MCF 10A (cell line): ENCODE measurements at regions of chr1 and their contacts with region 1.

Region 1: GRCh38 chr1:15046487-15047165 is 106.9 kb upstream of the TMEM51 start:
- DNase-seq: peak; percentile 80
- H3K4me3 Mint-ChIP-seq: no peak overlapping the region
- H3K27ac Mint-ChIP-seq: no peak overlapping the region
- H3K4me1 Mint-ChIP-seq: no peaks in the 10 kb centered on the region
- H3K27me3 Mint-ChIP-seq: no peaks in the 10 kb centered on the region
- CTCF ChIP-seq: peak; percentile 95

Region 2: DNA sequence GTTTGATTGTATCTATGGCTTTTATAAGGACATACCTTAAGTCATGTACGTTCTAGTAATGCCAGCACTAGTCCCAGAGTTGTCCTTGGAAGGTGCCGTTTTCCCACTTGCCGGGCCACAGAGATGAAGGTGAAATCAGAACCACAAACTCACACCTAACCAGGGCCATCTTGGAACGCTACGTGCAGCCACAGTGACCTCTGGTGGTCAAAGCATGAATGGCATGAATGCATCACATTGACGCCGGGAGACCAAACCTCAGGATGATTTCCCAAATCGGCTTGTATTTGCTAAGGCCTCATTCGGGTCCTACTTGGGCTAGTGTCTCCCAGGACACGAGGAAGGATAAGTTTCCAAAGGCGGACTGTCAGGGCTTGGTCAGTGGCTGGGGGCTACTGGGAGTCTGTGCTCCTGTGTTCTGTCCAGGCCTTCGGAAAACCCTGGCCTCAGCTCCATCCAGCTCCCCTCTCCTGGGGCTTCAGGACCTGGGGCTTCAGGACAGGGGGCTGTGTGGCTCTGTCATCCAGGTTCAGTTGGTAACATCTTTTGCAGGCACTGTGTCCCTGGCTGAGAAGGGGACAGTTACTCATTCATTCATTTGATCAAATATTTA is 1086.1 kb before region 1 on chr1:
- CTCF ChIA-PET with region 1: interaction called, 12 read pairs
- POLR2A ChIA-PET with region 1: no interaction called
- intact Hi-C with region 1: no loop called
- DNase-seq: peak; percentile 79
- H3K4me3 Mint-ChIP-seq: no peak overlapping the region
- H3K27ac Mint-ChIP-seq: no peak overlapping the region
- H3K4me1 Mint-ChIP-seq: peaks cover 14% of the 10 kb centered on the region
- H3K27me3 Mint-ChIP-seq: no peaks in the 10 kb centered on the region
- CTCF ChIP-seq: peak; percentile 93

Region 3: DNA sequence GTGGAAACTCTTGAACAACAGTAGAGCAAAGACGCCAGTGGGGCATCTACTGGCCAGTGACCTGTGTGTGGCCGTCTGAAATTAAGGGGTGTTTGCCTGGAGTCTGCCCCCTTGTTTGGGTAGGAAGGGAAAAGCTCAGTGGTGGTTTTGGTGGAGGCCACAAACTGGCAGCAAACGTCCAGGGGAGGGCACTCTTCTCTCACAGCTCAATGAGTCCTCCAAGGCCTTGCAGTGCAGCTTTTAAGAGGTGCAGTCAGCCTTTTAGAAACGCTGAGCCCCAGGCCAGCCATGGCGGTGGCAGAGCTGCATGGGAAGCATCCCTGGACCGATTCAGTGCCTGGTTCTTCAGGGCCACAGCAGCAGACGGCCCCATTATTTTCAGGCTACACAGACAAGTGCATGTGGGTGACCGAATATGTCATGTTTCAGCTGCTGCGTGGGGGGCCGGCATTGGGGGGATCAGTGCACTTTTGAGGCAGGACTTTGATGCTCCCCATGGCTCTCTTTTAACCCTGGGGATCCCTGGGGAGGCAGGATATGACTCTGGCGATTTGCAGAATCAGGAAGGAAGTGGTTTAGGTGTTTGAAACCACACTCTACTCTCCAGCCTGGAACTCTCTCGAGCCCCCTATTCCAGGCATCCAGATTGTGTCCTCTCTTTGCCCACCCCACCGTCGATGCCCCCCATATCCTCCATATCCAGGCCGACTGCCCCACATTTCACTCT is 932.6 kb before region 1 on chr1:
- CTCF ChIA-PET with region 1: interaction called, 17 read pairs
- POLR2A ChIA-PET with region 1: no interaction called
- intact Hi-C with region 1: loop called (anchors 2 kb)
- DNase-seq: peak; percentile 65
- H3K4me3 Mint-ChIP-seq: no peak overlapping the region
- H3K27ac Mint-ChIP-seq: no peak overlapping the region
- H3K4me1 Mint-ChIP-seq: peaks cover 43% of the 10 kb centered on the region
- H3K27me3 Mint-ChIP-seq: no peaks in the 10 kb centered on the region
- CTCF ChIP-seq: peak; percentile 82

Region 4: DNA sequence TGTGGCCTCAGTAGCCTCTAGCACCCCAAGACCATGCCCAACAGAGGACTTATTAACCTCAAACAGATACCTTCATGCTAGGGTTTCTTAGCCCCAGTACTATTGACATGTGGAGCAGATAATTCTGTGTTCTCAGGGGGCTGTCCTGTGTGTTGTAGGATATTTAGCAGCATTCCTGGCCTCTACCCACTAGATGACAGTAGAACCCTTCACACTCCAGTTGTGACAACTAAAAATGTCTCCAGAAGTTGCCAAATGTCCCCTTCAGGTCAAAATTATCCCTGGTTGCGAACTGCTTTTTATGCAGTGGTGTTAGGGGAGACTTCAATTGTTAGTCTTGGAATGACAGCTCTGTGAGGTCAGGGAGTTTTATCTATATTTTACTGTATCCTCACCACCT is 440.0 kb before region 1 on chr1:
- CTCF ChIA-PET with region 1: interaction called, 5 read pairs
- POLR2A ChIA-PET with region 1: no interaction called
- intact Hi-C with region 1: loop called (anchors 2 kb)
- DNase-seq: peak; percentile 6
- H3K4me3 Mint-ChIP-seq: no peak overlapping the region
- H3K27ac Mint-ChIP-seq: no peak overlapping the region
- H3K4me1 Mint-ChIP-seq: no peaks in the 10 kb centered on the region
- H3K27me3 Mint-ChIP-seq: peaks cover 7% of the 10 kb centered on the region
- CTCF ChIP-seq: peak; percentile 37

Region 5: GRCh38 chr1:15056515-15057285 is 10.1 kb after region 1 on chr1:
- CTCF ChIA-PET with region 1: interaction called, 11 read pairs
- POLR2A ChIA-PET with region 1: no interaction called
- intact Hi-C with region 1: no loop called
- DNase-seq: peak; percentile 46
- H3K4me3 Mint-ChIP-seq: no peak overlapping the region
- H3K27ac Mint-ChIP-seq: no peak overlapping the region
- H3K4me1 Mint-ChIP-seq: no peaks in the 10 kb centered on the region
- H3K27me3 Mint-ChIP-seq: no peaks in the 10 kb centered on the region
- CTCF ChIP-seq: no peak